Mammary epithelial cell (primary cell): ENCODE measurements at regions of chr12 and their contacts with region 1.

Region 1: DNA sequence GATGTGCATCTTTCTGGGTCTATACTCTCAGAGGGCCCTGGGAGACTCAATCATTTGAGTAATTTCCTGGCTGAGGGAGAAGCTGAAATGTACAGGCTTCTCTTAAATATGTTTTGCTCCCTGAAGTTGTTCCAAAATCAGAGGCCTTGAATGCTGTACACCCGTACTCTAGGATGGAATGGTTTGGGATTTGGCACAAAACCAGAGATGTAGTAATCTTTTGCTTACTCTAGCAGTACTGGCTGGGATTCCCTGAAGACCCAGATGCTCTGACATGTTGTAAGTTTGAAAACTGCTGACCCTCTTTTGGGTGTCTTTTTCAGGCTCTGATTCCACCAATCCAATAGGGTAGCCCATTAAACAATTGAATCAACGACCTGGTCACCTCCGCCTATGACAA is 10.4 kb downstream of the ACACB start:
- DNase-seq: no peak
- H3K4me3 ChIP-seq: no peak overlapping the region
- H3K27ac ChIP-seq: no peak overlapping the region
- H3K4me1 ChIP-seq: no peaks in the 10 kb centered on the region
- H3K27me3 ChIP-seq: no peaks in the 10 kb centered on the region
- CTCF ChIP-seq: no peak

Region 2: GRCh38 chr12:107478881-107479280 is 1647.9 kb before region 1 on chr12:
- CTCF ChIA-PET with region 1: interaction called, 13 read pairs
- dilution Hi-C with region 1: no loop called
- in situ Hi-C with region 1: no loop called
- intact Hi-C with region 1: no loop called
- DNase-seq: no peak
- H3K4me3 ChIP-seq: no peak overlapping the region
- H3K27ac ChIP-seq: no peak overlapping the region
- H3K4me1 ChIP-seq: peaks cover 1% of the 10 kb centered on the region
- H3K27me3 ChIP-seq: no peaks in the 10 kb centered on the region
- CTCF ChIP-seq: no peak